Activated CD8-positive, alpha-beta T cell treated with anti-CD3 and anti-CD28 coated beads for 36 hours (primary cell): ENCODE measurements at regions of chr4 and their contacts with region 1.

Region 1: DNA sequence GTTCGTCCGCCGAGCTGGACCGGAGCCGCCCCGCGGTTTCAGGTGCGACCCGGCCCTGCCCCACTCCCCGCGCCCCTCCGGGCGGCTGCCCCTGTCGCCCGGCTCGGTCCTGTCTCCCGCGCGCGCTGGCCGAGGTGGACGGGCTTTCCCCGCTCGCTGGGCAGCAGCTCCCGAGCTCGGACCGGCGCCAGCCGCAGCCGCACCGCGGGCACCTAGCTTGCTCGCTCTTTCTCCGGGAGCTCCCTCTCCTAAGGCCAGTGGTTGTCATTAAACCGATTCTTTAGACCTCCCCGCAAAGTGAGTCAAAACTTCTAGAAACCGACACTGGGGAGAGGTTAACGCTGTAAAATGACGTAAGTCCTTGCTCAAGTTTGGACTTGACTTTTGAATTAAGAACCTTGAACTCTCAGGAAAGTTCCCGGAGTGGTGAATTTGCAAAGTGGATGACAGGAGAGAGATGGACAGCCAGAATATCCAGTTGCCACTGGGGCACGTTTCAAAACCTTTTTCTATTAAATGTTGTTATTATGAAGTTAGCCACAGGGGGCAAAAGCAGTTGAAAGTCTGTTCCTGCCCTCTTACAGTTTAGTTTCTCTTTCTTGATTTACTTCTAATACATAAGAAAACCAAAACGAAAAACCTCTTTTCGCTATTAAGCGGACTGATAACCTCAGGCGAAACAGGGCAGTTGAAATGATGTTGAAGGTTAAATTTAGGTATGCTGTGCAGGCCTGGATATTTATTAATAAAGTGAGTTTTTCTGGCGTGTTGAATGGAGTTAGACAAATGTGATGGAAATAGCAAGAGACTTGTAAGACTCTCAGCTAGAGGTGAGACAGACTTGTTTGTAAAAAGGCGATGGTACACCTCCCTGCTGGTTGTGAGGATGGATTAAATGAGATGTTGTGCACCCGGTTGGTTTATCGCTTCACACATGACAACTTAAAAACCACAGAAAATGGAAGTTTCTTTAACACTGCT is 847 bp downstream of the PI4K2B start:
- DNase-seq: peak; percentile 60
- ATAC-seq: peak; percentile 59
- H3K4me3 Mint-ChIP-seq: peak overlapping the region; percentile 94
- H3K27ac Mint-ChIP-seq: peak overlapping the region; percentile 94
- H3K4me1 Mint-ChIP-seq: peaks cover 47% of the 10 kb centered on the region
- H3K27me3 Mint-ChIP-seq: no peaks in the 10 kb centered on the region
- CTCF ChIP-seq: peak; percentile 66

Region 2: DNA sequence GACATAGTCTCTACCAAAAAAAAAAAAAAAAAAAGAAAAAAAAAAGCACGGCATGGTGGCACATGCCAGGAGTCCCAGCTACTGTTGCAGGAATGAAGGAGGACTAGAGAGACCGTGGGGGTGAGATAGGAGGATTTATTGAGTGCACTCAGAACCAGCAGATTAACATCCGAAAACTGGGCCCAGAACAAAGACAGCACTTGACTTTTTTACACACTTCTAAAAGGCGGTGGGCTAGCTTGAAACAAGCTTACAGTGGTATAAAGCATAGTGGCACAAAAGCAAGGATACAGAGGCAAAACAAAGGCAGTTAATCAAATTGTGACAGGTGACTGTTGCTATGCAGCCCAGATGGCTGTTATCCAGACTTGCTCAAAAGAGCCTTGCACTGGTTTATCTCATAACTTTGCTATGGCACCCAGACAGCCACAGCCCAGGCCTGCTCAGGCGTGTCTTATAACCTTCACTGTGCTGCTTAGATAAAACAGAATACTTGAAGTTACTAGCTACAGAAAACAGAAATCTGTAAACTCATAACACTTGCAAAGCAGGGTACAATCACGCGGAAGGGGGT is 10.8 kb before region 1 on chr4:
- CTCF ChIA-PET with region 1: interaction called, 3 read pairs
- POLR2A ChIA-PET with region 1: interaction called, 11 read pairs
- intact Hi-C with region 1: no loop called
- DNase-seq: peak; percentile 17
- ATAC-seq: no peak
- H3K4me3 Mint-ChIP-seq: no peak overlapping the region
- H3K27ac Mint-ChIP-seq: no peak overlapping the region
- H3K4me1 Mint-ChIP-seq: no peaks in the 10 kb centered on the region
- H3K27me3 Mint-ChIP-seq: no peaks in the 10 kb centered on the region
- CTCF ChIP-seq: no peak

Region 3: DNA sequence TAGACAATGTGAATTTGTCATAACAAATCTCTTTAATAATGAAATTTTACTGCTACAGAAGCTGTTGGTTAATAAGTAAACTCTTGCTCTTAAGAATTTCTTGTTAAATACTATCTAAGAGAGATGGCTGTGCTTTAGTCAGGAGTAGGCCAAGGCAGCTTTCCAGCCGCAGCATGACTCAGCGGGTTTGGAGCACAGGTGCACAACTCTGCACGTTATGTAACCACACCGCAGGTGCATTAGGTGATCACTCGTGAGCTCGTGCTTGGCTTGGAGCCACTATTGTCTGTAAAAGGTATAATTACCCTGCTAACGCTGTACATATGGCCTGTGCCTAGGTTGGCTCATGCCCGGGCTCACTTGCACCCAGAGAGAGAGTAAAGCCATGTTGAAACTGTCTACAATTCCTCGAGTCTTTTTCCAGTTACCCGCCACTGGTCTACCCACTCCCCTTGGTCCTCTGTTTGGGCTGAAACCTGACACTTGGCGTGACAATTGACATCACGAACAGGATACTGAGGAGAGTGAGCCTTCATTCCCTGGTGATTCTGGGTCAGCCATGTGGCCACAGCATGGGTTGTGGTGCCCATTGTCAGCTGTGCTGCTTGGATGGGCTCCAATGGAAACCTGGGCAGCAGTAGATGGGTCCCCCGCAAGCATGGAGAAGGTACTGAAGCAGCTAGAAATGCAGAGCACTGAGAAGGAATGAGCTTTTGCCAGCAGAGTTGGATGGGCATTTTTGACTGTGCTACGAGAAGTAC is 124.0 kb after region 1 on chr4:
- CTCF ChIA-PET with region 1: no interaction called
- POLR2A ChIA-PET with region 1: no interaction called
- intact Hi-C with region 1: no loop called
- DNase-seq: no peak
- ATAC-seq: no peak
- H3K4me3 Mint-ChIP-seq: no peak overlapping the region
- H3K27ac Mint-ChIP-seq: no peak overlapping the region
- H3K4me1 Mint-ChIP-seq: no peaks in the 10 kb centered on the region
- H3K27me3 Mint-ChIP-seq: no peaks in the 10 kb centered on the region
- CTCF ChIP-seq: no peak